Activated T-helper 2 cell treated with anti-CD3 and anti-CD28 coated beads, Interferon-gamma antibody, Interleukin-2, Interleukin-4, amounts not matched to agents 10 μg/mL and 5 μg/mL and 100 μg/mL, durations not matched to agents 14 hours and 24 hours and 36 hours (primary cell): ENCODE measurements at regions of chr7 and their contacts with region 1.

Region 1: GRCh38 chr7:119935418-119936025 is 337.5 kb upstream of the KCND2 start:
- DNase-seq: no peak
- H3K4me3 Mint-ChIP-seq: no peak overlapping the region
- H3K27ac Mint-ChIP-seq: no peak overlapping the region
- H3K4me1 Mint-ChIP-seq: no peaks in the 10 kb centered on the region
- H3K27me3 Mint-ChIP-seq: no peaks in the 10 kb centered on the region

Region 2: GRCh38 chr7:120725376-120726039 is 790.0 kb after region 1 on chr7:
- intact Hi-C with region 1: loop called (anchors 10 kb)
- DNase-seq: no peak
- H3K4me3 Mint-ChIP-seq: no peak overlapping the region
- H3K27ac Mint-ChIP-seq: no peak overlapping the region
- H3K4me1 Mint-ChIP-seq: no peaks in the 10 kb centered on the region
- H3K27me3 Mint-ChIP-seq: no peaks in the 10 kb centered on the region